Gastrocnemius medialis (tissue), 4 donors: ENCODE measurements at regions of chr9 and their contacts with region 1.

Region 1: DNA sequence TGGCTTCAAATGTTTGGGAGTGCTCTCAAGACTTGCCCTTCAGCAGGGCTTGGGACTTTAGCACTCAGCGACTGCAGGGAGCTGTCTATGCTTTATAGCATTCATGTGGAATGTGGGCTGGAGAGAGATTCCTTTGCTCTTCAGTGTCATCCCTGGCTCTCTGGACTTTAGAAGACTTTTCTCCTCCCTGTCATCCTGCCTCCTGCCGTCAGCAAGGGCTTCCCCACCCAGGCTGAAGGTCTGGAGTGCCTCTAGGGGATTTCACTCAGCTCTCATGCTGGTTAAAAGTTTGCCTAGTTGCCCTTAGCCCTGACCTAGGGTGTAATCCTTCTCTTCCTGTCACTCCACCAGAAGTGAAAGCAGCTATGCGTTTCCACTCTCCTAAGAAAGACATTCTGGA is 210.9 kb downstream of the FRMD3 start:
- DNase-seq: no peak
- ATAC-seq: no peak
- H3K4me3 ChIP-seq: no peak overlapping the region
- H3K27ac ChIP-seq: no peak overlapping the region
- H3K4me1 ChIP-seq: no peaks in the 10 kb centered on the region
- H3K27me3 ChIP-seq: no peaks in the 10 kb centered on the region
- CTCF ChIP-seq: no peak
- POLR2A ChIP-seq: no peak

Region 2: GRCh38 chr9:83422527-83422926 is 95.2 kb after region 1 on chr9:
- in situ Hi-C with region 1: no loop called
- intact Hi-C with region 1: no loop called
- DNase-seq: no peak
- ATAC-seq: no peak
- H3K4me3 ChIP-seq: no peak overlapping the region
- H3K27ac ChIP-seq: no peak overlapping the region
- H3K4me1 ChIP-seq: peaks cover 7% of the 10 kb centered on the region in 2 donors
- H3K27me3 ChIP-seq: no peaks in the 10 kb centered on the region
- CTCF ChIP-seq: no peak
- POLR2A ChIP-seq: no peak

Region 3: DNA sequence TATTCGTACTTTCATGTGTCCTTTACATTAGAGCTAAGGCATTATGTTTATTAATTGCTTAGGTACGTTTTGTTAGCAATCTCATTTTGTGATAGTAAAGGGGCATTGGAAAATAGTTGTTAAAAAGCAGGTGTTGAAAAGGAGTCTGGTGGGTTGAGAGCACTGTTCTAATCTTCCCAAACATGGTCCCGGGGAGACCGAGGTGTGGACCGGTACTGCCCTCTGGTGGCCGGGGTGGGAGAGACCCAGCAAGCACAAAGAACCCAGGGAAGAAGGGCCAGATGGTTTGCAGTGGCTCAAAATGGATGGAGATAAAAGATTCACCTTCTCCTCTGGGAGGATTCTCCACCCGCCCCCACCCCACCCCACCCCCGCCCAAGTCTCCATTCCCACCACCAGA is 321.8 kb after region 1 on chr9:
- in situ Hi-C with region 1: loop called in 3 of 4 experiments (anchors 10 to 25 kb)
- intact Hi-C with region 1: no loop called
- DNase-seq: peak; percentile 14 to 60
- ATAC-seq: peak; percentile 61 to 80
- H3K4me3 ChIP-seq: no peak overlapping the region
- H3K27ac ChIP-seq: no peak overlapping the region
- H3K4me1 ChIP-seq: no peaks in the 10 kb centered on the region
- H3K27me3 ChIP-seq: no peaks in the 10 kb centered on the region
- CTCF ChIP-seq: peak; percentile 36 to 82 (median 72)
- POLR2A ChIP-seq: no peak